Thyroid gland (tissue), 4 donors: ENCODE measurements at regions of chr2 and their contacts with region 1.

Region 1: DNA sequence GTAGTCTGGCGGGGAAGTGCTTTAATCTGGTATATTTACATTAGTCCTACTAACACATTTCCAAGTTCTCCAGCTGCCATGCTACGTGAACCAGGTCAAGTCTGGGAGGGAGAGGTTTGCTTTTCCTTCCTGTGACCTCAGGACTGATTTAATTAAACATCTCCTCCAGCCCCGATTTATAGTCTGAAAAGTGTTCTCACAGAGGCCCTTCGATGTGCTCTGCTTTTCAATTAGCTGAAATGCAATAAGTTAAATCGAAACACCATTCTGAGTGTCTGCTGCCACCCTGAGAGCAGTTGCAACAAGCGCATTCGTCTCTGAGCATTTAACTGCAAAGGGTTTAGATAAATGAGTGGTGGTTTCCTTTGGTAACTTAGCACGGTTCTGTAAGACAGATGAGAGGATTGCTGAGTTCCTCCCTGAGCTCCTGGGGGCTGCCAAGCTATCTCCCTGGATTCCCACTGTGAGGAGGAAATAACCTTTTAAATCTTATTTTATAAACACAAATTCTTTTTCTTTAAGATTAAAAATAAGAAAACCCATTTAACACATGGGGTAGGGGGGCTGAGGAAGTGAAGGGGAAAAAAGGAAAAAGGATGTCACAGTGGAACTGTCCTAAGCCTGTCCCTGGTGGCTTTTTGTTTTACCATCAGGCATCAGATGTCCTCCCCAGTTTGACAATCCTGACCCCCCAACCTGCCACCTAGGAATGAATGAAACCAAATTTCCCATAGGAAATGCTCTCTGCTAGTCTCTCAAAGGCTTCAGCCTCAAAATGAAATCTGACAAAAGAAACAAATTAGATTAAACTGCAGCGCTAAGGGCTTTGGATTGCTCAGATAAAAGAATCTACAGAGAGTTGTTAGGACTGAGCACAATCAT is 56.5 kb upstream of the CREB1 start:
- DNase-seq: peak; percentile 35 to 40
- H3K4me3 ChIP-seq: no peak overlapping the region
- H3K27ac ChIP-seq: no peak overlapping the region
- H3K4me1 ChIP-seq: no peaks in the 10 kb centered on the region
- H3K27me3 ChIP-seq: no peaks in the 10 kb centered on the region
- CTCF ChIP-seq: peak in 4 of 6 experiments; percentile 32 to 46 (median 41)
- POLR2A ChIP-seq: no peak

Region 2: GRCh38 chr2:206693399-206694137 is 779.7 kb before region 1 on chr2:
- intact Hi-C with region 1: loop called (anchors 10 kb)
- DNase-seq: peak; percentile 19 to 22
- H3K4me3 ChIP-seq: no peak overlapping the region
- H3K27ac ChIP-seq: no peak overlapping the region
- H3K4me1 ChIP-seq: no peaks in the 10 kb centered on the region
- H3K27me3 ChIP-seq: no peaks in the 10 kb centered on the region
- CTCF ChIP-seq: peak; percentile 39 to 75 (median 56)
- POLR2A ChIP-seq: no peak

Region 3: GRCh38 chr2:206800506-206801417 is 672.5 kb before region 1 on chr2:
- intact Hi-C with region 1: loop called (anchors 5 kb)
- DNase-seq: peak; percentile 65 to 73
- H3K4me3 ChIP-seq: no peak overlapping the region
- H3K27ac ChIP-seq: no peak overlapping the region
- H3K4me1 ChIP-seq: peaks cover 0 to 7% of the 10 kb centered on the region in 2 donors
- H3K27me3 ChIP-seq: no peaks in the 10 kb centered on the region
- CTCF ChIP-seq: peak in 5 of 6 experiments; percentile 47 to 87 (median 68)
- POLR2A ChIP-seq: no peak

Region 4: GRCh38 chr2:206989306-206989705 is 484.0 kb before region 1 on chr2:
- intact Hi-C with region 1: loop called (anchors 5 kb)
- DNase-seq: peak; percentile 29 to 42
- H3K4me3 ChIP-seq: no peak overlapping the region
- H3K27ac ChIP-seq: no peak overlapping the region
- H3K4me1 ChIP-seq: peaks cover 0 to 5% of the 10 kb centered on the region in 2 donors
- H3K27me3 ChIP-seq: no peaks in the 10 kb centered on the region
- CTCF ChIP-seq: peak; percentile 32 to 72 (median 50)
- POLR2A ChIP-seq: no peak

Region 5: GRCh38 chr2:207375192-207375861 is 98.0 kb before region 1 on chr2:
- intact Hi-C with region 1: no loop called
- DNase-seq: no peak
- H3K4me3 ChIP-seq: no peak overlapping the region
- H3K27ac ChIP-seq: no peak overlapping the region
- H3K4me1 ChIP-seq: no peaks in the 10 kb centered on the region
- H3K27me3 ChIP-seq: no peaks in the 10 kb centered on the region
- CTCF ChIP-seq: no peak
- POLR2A ChIP-seq: no peak

Region 6: GRCh38 chr2:207594264-207594663 is 121.0 kb after region 1 on chr2:
- intact Hi-C with region 1: no loop called
- DNase-seq: no peak
- H3K4me3 ChIP-seq: no peak overlapping the region
- H3K27ac ChIP-seq: no peak overlapping the region
- H3K4me1 ChIP-seq: no peaks in the 10 kb centered on the region
- H3K27me3 ChIP-seq: no peaks in the 10 kb centered on the region
- CTCF ChIP-seq: no peak
- POLR2A ChIP-seq: no peak